ENCODE measurements at regions of chr2 and their contacts with region 1.

Region 1: DNA sequence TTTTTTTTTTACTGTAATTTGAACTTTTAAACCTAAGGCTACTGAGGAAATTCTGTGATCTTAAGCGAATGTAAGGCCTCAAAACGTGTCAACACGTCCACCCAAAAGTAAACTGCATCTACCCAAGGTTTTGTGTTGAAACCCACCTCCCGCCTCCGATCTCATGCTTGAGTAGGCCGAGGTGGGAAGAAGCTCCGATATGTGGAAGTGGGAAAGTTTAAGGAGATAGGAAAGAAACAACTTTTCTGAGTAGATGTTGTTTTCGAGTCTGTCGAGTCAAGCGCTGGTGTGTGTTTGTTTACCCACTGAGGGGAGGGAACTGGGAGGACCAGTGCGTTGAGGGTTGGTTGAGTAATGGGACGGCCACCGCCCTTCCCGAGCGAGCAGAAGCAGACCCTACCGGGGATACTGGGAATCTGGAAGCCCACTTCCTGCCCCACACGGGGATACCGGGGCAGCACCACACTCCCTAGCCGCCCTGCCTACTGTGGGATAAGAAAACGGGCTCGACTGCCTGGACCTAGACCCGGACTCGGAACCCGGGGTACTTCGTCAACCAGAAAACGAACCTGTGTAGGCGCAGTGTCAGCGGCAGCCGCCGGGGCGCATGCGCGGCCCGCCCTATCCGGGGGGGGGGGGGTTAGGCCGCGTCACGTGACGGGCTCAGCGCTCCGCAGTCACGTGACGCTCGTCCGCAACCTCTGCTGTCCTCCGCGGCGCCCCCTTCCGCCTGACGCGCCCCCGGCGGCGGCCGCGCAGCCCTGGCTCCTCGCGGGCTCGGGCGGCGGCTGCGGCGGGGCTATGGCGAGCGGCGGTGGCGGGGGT is at the start of gene RETREG2:
- DNase-seq: peak; percentile 83 to 92 (median 88)
- ATAC-seq: peak; percentile 82
- H3K4me3 ChIP-seq: peak within 1 kb of the TSS; percentile 23 to 87
- H3K27ac ChIP-seq: peak within 1 kb of the TSS; percentile 96 to 100 (median 98)
- H3K4me1 ChIP-seq: peaks cover 34% of the 10 kb centered on the region
- H3K27me3 ChIP-seq: no peaks in the 10 kb centered on the region
- CTCF ChIP-seq: peak in 6 of 7 experiments; percentile 15 to 54 (median 30)
- POLR2A ChIP-seq: peak; percentile 94 to 98 (median 95)
- total RNA-seq, gene RETREG2: 41.9 to 43.6 TPM

Region 2: DNA sequence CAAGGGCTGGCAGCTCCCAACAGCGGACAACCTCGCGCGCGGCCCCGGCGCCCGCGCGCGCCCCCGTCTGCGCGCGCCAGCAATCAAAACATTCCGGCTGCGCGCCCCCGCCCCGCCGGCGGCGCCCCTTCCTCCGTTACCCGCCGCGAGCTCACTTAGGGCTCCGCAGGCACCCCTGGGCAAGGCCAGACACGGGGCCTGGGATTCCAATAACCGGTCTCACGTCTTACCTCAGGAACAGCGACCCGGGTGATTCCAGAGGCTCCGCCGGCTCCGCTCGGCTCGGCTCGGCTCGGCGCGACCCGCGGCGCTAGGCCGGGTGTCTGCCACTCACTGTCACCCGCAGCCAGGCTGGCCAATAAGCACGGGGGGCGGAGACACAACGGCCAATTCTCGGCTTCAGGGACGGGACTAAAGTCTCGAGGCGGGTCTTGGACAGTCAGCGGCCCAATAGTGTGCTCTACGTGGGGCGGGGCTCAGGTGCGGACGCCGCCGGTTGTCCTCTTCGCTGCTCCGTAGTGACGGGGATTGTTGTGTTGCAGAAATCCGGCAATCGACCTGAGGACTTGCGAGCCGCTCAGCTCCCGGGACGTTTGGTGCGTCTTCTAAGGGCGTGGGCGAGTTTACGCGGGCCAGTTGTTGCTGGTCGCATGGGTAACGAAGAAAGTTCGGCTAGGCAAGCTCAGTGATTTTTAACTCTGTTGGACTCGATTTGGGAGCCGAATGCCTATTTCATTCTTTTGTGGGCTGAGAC is 51.7 kb after region 1 on chr2 and contains the starts of genes ANKZF1 and ATG9A:
- intact Hi-C with region 1: loop called (anchors 10 kb)
- DNase-seq: peak; percentile 98 to 99 (median 99)
- ATAC-seq: peak; percentile 98
- H3K4me3 ChIP-seq: peak within 1 kb of the TSS; percentile 48
- H3K27ac ChIP-seq: peak within 1 kb of the TSS; percentile 80 to 96 (median 90)
- H3K4me1 ChIP-seq: peaks cover 31% of the 10 kb centered on the region
- H3K27me3 ChIP-seq: no peaks in the 10 kb centered on the region
- CTCF ChIP-seq: peak in 1 of 7 experiments; percentile 2
- POLR2A ChIP-seq: peak; percentile 60 to 91 (median 89)
- total RNA-seq, gene ANKZF1: 67.5 to 95.3 TPM
- total RNA-seq, gene ATG9A: 21.0 to 27.7 TPM

Region 3: DNA sequence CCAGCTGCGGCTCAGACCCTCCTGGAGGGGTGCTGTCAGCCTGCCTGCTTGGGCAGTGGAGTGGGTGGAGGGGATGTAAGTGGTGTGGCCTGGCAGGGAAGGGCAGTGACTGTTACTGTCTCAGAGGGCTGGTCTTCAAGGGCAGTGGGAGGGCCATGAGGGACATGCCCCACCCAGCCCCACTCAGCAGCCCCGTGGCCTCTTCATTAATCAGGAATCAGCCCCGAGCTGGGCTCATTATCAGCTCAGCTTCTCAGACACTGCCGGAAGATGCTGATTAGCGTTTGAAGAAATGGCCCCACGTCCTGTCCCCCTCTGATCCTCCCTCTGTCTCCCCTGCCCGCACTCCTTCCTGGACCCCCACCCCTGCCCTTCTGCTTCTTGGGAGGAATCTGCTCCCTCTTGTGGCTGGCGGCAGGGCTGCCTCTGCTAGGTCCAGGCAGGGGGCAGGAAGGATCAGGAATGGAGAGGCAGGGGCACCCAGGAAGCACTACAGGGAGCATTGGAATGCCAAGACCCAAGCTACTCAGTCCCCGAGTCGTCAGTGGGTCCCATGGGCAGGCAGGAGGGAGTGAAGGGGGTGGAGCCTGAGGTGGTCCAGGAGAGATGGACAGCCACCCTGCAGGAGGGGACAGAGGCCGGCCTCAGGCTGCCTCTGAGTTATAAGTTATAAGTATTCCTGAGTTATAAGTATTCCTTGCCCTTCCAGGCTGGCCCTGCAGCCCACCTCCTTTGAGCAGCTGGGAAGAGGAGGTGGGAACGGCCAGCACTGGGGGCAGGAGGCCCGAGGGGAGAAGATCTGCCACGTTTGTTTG is 343.5 kb after region 1 on chr2:
- intact Hi-C with region 1: no loop called
- DNase-seq: peak in 2 of 4 donors; percentile 39 to 52
- ATAC-seq: peak; percentile 39
- H3K4me3 ChIP-seq: no peak overlapping the region
- H3K27ac ChIP-seq: no peak overlapping the region
- H3K4me1 ChIP-seq: peaks cover 9% of the 10 kb centered on the region
- H3K27me3 ChIP-seq: peaks cover 0 to 17% of the 10 kb centered on the region in 2 donors
- CTCF ChIP-seq: peak in 6 of 7 experiments; percentile 13 to 52 (median 42)
- POLR2A ChIP-seq: no peak

Region 4: GRCh38 chr2:219543601-219544358 is 366.0 kb after region 1 on chr2 and contains the starts of genes CHPF and TMEM198:
- intact Hi-C with region 1: no loop called
- DNase-seq: peak; percentile 99 to 100 (median 99)
- ATAC-seq: peak; percentile 91
- H3K4me3 ChIP-seq: peak within 1 kb of the TSS; percentile 92 to 95
- H3K27ac ChIP-seq: peak within 1 kb of the TSS; percentile 94 to 98 (median 97)
- H3K4me1 ChIP-seq: peaks cover 32% of the 10 kb centered on the region
- H3K27me3 ChIP-seq: no peaks in the 10 kb centered on the region
- CTCF ChIP-seq: peak in 2 of 7 experiments; percentile 9 to 35
- POLR2A ChIP-seq: peak; percentile 87 to 93 (median 91)
- total RNA-seq, gene CHPF: 115 to 232 TPM
- total RNA-seq, gene TMEM198: 3.3 to 5.7 TPM